ENCODE measurements at regions of chr2 and their contacts with region 1.

Region 1: DNA sequence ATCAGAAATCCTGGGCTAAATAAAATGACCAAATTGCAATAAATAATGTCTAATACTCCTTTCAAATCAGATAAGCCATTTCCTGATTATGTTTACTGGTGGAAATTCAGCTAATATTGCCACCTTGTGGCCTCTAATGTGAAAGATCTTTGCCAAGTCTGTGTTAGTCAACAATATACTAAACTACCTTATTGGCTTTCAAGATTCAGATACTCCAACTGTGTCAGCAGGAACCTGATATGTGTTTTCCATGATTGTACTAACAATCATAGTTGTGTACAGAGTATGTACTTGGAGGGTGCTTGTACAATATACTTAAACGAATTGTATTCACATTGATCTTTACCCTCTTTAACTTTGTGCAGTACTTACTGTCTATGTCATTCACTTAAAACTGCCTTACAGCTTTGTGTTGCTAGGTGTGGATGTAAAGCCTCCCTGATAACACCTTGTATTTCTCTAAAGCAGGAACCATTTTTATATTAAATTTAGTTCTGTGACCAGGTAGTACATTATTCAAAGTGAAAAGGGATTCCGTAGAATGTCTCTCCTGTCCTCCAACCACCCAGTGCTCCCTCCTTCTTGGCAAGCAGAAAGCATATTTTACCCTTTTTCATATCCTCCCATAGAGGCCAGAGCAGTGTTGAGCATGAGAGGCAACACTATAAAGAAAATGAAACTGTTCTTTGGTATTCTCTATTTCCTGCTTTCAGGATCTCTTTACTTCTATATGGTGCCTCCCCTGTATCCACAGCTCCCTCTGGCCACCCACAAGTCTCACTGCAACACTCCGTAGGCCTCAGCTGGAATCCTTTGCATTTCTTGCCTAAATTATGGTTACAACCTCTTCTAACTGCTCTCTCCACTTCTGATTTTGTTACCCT is 75.2 kb upstream of the C2orf15 start:
- DNase-seq: peak in 3 of 10 donors; percentile 9 to 55 (median 13)

Region 2: DNA sequence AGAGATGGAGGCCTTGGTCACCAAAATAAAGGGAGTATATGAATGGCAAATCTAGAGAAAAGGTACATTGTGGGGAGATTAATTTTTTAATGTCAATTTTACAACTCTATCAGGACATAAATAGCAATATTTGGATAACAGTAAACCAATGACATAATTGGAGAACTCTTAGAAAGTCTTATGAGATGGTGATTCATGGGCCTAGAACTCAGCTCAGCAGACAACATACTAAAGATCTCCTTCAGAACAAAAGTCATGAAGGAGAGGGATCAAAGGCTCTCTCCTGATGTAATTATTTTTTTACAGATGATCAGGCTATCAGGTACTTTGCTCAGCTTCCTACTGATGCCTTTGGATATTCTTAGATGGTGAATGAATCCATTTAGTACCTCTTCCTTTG is 220.3 kb before region 1 on chr2:
- intact Hi-C with region 1: loop called (anchors 10 kb)
- DNase-seq: no peak